ENCODE measurements at regions of chr16 and their contacts with region 1.

Region 1: GRCh38 chr16:84084570-84085270 is 32.0 kb downstream of the MBTPS1 start:
- DNase-seq: peak; percentile 44
- H3K4me3 ChIP-seq: no peak overlapping the region
- H3K27ac ChIP-seq: no peak overlapping the region
- H3K4me1 ChIP-seq: peaks cover 8% of the 10 kb centered on the region
- H3K27me3 ChIP-seq: no peaks in the 10 kb centered on the region
- CTCF ChIP-seq: peak; percentile 72 to 91

Region 2: DNA sequence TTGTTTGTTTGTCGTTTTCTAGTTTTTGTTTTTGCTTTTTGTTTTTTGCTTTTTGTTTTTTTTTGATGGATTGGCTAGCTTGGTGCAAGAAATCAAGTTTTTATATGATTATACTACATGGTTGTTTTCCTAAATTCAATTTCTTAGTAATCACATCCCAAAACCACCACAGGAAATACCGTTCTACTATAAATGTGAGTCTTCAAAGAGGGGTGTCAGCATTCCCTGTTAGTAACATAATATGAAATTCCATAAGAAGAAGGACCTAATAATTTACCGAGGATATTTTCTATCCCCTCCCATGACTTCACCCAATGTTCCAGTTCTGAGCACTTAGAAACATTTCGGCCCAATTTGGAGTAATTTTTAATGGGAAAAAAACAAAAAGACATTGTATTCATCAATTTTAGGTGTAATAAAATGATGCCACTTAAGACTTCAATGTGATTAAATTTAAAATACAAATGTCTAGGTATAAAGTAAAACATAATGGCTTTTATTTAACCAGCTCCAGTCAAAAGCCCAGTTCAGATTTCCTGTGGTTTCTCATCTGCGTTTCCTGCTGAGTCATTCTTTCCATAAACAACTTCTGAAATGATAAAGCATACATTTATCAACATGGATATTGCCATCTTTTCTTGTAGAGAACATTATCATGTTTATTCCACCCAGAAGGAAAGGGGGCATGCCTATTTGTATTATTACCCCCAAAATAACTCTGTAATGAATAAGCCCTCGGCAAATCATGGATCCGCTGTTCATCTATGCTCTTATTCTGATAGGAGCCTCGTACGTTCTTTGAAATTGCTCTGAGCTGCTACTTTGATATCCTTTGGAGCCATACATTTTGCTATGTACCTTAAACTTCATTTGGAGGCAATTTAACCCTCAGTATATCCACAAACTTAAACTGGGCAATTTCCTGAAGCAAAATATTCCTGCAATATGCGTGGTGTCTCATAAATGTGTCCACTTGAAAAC is 248.8 kb before region 1 on chr16:
- CTCF ChIA-PET with region 1: no interaction called
- dilution Hi-C with region 1: no loop called
- in situ Hi-C with region 1: no loop called
- intact Hi-C with region 1: no loop called
- DNase-seq: peak; percentile 47
- H3K4me3 ChIP-seq: no peak overlapping the region
- H3K27ac ChIP-seq: no peak overlapping the region
- H3K4me1 ChIP-seq: peaks cover 10% of the 10 kb centered on the region
- H3K27me3 ChIP-seq: no peaks in the 10 kb centered on the region
- CTCF ChIP-seq: no peak

Region 3: GRCh38 chr16:83975590-83976260 is 109.0 kb before region 1 on chr16:
- CTCF ChIA-PET with region 1: no interaction called
- dilution Hi-C with region 1: loop called (anchors 5 kb)
- in situ Hi-C with region 1: no loop called
- intact Hi-C with region 1: no loop called
- DNase-seq: no peak
- H3K4me3 ChIP-seq: no peak overlapping the region
- H3K27ac ChIP-seq: no peak overlapping the region
- H3K4me1 ChIP-seq: no peaks in the 10 kb centered on the region
- H3K27me3 ChIP-seq: no peaks in the 10 kb centered on the region
- CTCF ChIP-seq: no peak

Region 4: GRCh38 chr16:84055366-84055765 is 29.4 kb before region 1 on chr16:
- CTCF ChIA-PET with region 1: no interaction called
- dilution Hi-C with region 1: no loop called
- in situ Hi-C with region 1: no loop called
- intact Hi-C with region 1: no loop called
- DNase-seq: no peak
- H3K4me3 ChIP-seq: no peak overlapping the region
- H3K27ac ChIP-seq: no peak overlapping the region
- H3K4me1 ChIP-seq: no peaks in the 10 kb centered on the region
- H3K27me3 ChIP-seq: no peaks in the 10 kb centered on the region
- CTCF ChIP-seq: no peak

Region 5: GRCh38 chr16:84175350-84176081 is 90.8 kb after region 1 on chr16:
- CTCF ChIA-PET with region 1: no interaction called
- dilution Hi-C with region 1: no loop called
- in situ Hi-C with region 1: loop called in 1 of 2 experiments (anchors 10 kb)
- intact Hi-C with region 1: no loop called
- DNase-seq: peak; percentile 55
- H3K4me3 ChIP-seq: no peak overlapping the region
- H3K27ac ChIP-seq: no peak overlapping the region
- H3K4me1 ChIP-seq: peaks cover 6% of the 10 kb centered on the region
- H3K27me3 ChIP-seq: no peaks in the 10 kb centered on the region
- CTCF ChIP-seq: peak; percentile 84 to 89

Region 6: GRCh38 chr16:84308120-84308519 is 223.4 kb after region 1 on chr16:
- CTCF ChIA-PET with region 1: no interaction called
- dilution Hi-C with region 1: no loop called
- in situ Hi-C with region 1: no loop called
- intact Hi-C with region 1: loop called (anchors 5 kb)
- DNase-seq: no peak
- H3K4me3 ChIP-seq: no peak overlapping the region
- H3K27ac ChIP-seq: no peak overlapping the region
- H3K4me1 ChIP-seq: no peaks in the 10 kb centered on the region
- H3K27me3 ChIP-seq: peaks cover 8% of the 10 kb centered on the region
- CTCF ChIP-seq: peak; percentile 25 to 50

Region 7: DNA sequence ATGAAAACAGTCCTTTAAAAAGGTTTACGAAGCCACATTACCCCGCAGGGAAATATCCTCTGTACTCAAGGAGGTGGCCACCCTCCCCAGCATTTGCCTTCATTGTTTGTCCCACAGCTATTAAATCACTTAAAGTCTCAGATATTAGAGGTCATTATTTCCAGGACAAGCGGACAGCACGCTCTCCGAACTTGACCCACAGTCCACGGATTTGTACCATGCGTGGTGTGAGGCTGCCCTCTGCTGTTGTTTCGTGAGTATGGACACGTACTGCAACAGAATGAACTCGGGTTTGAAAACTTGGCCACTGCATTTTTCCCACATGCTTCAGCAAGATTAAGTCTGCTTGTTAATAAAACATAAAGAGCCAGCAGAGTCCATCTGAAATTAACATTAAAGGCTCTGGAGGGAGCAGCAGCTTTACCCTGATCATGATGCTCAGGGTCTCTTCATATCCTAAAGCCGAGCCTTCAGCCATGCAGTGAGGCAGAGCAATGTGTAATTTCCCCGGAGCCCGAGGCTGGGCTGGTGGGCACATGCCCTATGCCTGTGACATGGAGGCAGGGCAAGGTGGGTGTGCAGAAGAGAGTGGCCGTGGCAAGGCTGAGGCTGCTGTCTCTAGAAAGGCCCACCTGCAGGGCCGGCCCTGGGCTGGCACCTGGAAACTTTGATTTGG is 400.0 kb after region 1 on chr16:
- CTCF ChIA-PET with region 1: no interaction called
- dilution Hi-C with region 1: no loop called
- in situ Hi-C with region 1: loop called in 1 of 2 experiments (anchors 25 kb)
- intact Hi-C with region 1: loop called (anchors 10 kb)
- DNase-seq: no peak
- H3K4me3 ChIP-seq: no peak overlapping the region
- H3K27ac ChIP-seq: no peak overlapping the region
- H3K4me1 ChIP-seq: peaks cover 11% of the 10 kb centered on the region
- H3K27me3 ChIP-seq: no peaks in the 10 kb centered on the region
- CTCF ChIP-seq: peak; percentile 46 to 67